ENCODE measurements at regions of chr5 and their contacts with region 1.

Region 1: DNA sequence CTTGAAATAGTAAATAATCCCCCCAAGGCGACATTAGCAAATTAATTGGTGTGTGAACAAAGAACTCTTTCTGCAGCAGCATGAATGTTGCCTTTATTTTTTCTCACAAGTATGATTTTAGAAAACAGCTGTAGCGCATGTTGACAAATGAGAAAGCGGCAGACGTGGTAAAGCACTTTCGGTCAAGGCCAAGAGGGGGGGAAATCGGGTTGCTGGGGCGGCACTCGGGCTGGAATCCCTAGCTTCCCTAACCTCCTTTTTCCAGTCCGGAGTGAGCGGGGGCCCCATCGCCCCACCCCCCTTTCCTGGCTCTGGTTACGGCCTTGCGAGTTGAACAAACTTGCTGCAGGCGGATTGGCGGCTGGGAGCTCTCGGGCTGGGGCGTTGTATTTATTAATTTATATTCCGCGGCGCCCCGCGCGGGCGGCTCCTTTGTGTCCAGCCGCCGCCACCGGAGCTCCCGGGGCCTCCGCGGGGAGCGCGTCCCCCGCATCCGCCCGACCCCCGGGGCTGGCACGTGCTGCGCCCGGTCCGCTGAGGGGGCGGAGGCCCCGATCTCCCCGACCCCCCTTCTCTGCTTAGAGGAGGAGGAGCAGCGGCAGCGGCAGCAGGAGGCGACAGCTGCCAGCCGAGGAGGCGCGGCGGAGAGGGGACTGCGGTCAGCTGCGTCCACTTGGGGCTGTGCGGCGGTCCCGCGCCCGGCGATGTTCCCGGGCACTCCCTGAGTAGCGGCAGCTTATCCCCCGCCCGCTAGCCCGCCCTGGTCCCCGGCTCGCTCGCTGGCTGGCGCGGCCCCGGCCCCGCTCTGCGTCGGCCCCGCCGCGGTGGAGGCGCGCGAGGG is at the start of gene RHOBTB3:
- DNase-seq: no peak
- ATAC-seq: peak; percentile 53
- H3K4me3 ChIP-seq: peak within 1 kb of the TSS; percentile 78
- H3K27ac ChIP-seq: peak within 1 kb of the TSS; percentile 70
- H3K4me1 ChIP-seq: peaks cover 21% of the 10 kb centered on the region
- H3K27me3 ChIP-seq: no peaks in the 10 kb centered on the region
- CTCF ChIP-seq: peak in 2 of 3 experiments; percentile 4 to 22; a peak in 3 of 6 replicates
- EP300 ChIP-seq: 0 out of 4 replicates have a peak, but pooled peaks of 1 of the 2 experiments have one; percentile 8
- POLR2A ChIP-seq: peak; percentile 77
- RAD21 ChIP-seq: no peak
- polyA plus RNA-seq, gene RHOBTB3: 3.6 to 4.1 TPM

Region 2: GRCh38 chr5:95352691-95353090 is 378.3 kb before region 1 on chr5:
- CTCF ChIA-PET with region 1: no interaction called
- POLR2A ChIA-PET with region 1: no interaction called
- RAD21 ChIA-PET with region 1: no interaction called
- SMC1A ChIA-PET with region 1: no interaction called
- in situ Hi-C with region 1: no loop called
- intact Hi-C with region 1: no loop called
- DNase-seq: no peak
- ATAC-seq: no peak
- H3K4me3 ChIP-seq: no peak overlapping the region
- H3K27ac ChIP-seq: no peak overlapping the region
- H3K4me1 ChIP-seq: no peaks in the 10 kb centered on the region
- H3K27me3 ChIP-seq: no peaks in the 10 kb centered on the region
- CTCF ChIP-seq: no peak
- EP300 ChIP-seq: no peak
- POLR2A ChIP-seq: no peak
- RAD21 ChIP-seq: no peak

Region 3: GRCh38 chr5:95646554-95647431 is 84.2 kb before region 1 on chr5 and contains the start of gene RFESD:
- CTCF ChIA-PET with region 1: interaction called, 15 read pairs
- POLR2A ChIA-PET with region 1: interaction called, 12 read pairs
- RAD21 ChIA-PET with region 1: interaction called, 15 read pairs
- SMC1A ChIA-PET with region 1: interaction called, 18 read pairs
- in situ Hi-C with region 1: no loop called
- intact Hi-C with region 1: loop called (anchors 2 kb)
- DNase-seq: peak; percentile 83
- ATAC-seq: peak; percentile 97
- H3K4me3 ChIP-seq: peak within 1 kb of the TSS; percentile 75
- H3K27ac ChIP-seq: peak within 1 kb of the TSS; percentile 80
- H3K4me1 ChIP-seq: peaks cover 5% of the 10 kb centered on the region
- H3K27me3 ChIP-seq: no peaks in the 10 kb centered on the region
- CTCF ChIP-seq: peak in 2 of 3 experiments; percentile 2 to 9; a peak in 1 of 6 replicates
- EP300 ChIP-seq: no peak
- POLR2A ChIP-seq: peak; percentile 88
- RAD21 ChIP-seq: 0 out of 2 replicates have a peak, but pooled peaks have one; percentile 1
- polyA plus RNA-seq, gene RFESD: 14.0 to 14.7 TPM

Region 4: DNA sequence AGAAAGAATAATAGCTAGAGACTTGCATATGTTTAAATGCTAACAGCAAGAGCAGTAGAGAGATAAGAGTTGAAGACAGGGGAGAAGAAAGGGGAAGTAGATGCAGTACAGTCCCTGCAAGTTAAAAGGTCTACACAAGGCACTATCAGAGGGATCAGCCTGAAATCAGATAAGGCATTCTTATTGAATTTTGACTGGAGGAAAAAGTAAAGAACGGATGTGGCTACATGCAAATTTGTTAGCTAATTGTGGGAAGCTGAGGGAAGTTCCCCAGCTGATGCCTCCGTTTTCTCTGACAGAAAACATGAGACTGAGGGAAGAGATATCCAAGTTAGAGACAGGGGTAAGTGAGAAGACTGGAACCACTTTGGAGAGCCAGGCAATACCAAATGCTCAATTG is 12.7 kb before region 1 on chr5:
- CTCF ChIA-PET with region 1: interaction called, 11 read pairs
- POLR2A ChIA-PET with region 1: interaction called, 28 read pairs
- RAD21 ChIA-PET with region 1: interaction called, 32 read pairs
- SMC1A ChIA-PET with region 1: interaction called, 58 read pairs
- in situ Hi-C with region 1: no loop called
- intact Hi-C with region 1: loop called (anchors 1 kb)
- DNase-seq: peak; percentile 84
- ATAC-seq: peak; percentile 92
- H3K4me3 ChIP-seq: peak overlapping the region; percentile 44
- H3K27ac ChIP-seq: peak overlapping the region; percentile 40
- H3K4me1 ChIP-seq: peaks cover 25% of the 10 kb centered on the region
- H3K27me3 ChIP-seq: no peaks in the 10 kb centered on the region
- CTCF ChIP-seq: no peak
- EP300 ChIP-seq: peak; percentile 26 to 72; a peak in 1 of 4 replicates
- POLR2A ChIP-seq: no peak
- RAD21 ChIP-seq: no peak

Region 5: DNA sequence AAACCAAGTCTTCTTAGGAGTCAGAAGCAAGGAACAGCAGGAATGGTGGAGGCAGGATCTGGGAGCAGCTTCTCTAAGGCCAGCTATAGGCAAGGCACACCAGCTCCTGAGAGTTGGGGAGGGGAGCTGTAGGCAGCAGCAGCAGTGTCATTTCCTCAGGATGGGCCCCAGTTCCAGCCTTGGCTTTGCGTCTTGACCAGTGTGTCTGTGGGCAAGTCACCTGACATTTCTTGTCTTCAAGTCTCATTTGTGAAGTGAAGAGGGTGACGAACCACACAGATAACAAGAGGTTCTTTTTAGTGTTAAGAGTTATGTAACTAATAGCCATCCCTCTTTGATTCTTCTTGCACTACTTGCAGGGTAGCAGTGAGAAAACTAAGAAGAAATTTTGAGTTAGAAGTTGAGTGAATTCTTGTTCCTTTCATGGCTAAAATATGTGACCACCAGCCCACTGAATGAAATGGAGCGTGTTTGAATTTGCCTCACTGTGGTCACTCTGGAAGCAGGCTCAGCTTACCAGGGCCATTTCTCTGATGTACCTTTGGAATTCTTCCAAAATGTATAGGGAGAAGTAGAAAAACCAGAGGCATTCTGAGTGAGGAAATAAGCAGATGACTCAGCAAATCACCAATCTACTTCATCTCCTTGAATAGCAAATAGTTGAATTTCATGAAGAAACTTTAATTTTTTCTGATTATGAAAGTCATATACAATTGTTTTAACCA is 42.5 kb after region 1 on chr5:
- CTCF ChIA-PET with region 1: interaction called, 6 read pairs
- POLR2A ChIA-PET with region 1: no interaction called
- RAD21 ChIA-PET with region 1: interaction called, 6 read pairs
- SMC1A ChIA-PET with region 1: interaction called, 17 read pairs
- in situ Hi-C with region 1: no loop called
- intact Hi-C with region 1: no loop called
- DNase-seq: no peak
- ATAC-seq: peak; percentile 35; the same call in 2 of the 3 replicates
- H3K4me3 ChIP-seq: no peak overlapping the region
- H3K27ac ChIP-seq: no peak overlapping the region
- H3K4me1 ChIP-seq: peaks cover 4% of the 10 kb centered on the region; the same call in 1 of the 2 replicates
- H3K27me3 ChIP-seq: no peaks in the 10 kb centered on the region
- CTCF ChIP-seq: no peak
- EP300 ChIP-seq: no peak
- POLR2A ChIP-seq: no peak
- RAD21 ChIP-seq: no peak

Region 6: GRCh38 chr5:95822542-95823181 is 91.7 kb after region 1 on chr5 and contains the start of gene GLRX:
- CTCF ChIA-PET with region 1: interaction called, 4 read pairs
- POLR2A ChIA-PET with region 1: interaction called, 10 read pairs
- RAD21 ChIA-PET with region 1: interaction called, 15 read pairs
- SMC1A ChIA-PET with region 1: interaction called, 14 read pairs
- in situ Hi-C with region 1: no loop called
- intact Hi-C with region 1: loop called (anchors 5 kb)
- DNase-seq: no peak
- ATAC-seq: peak; percentile 66
- H3K4me3 ChIP-seq: peak within 1 kb of the TSS; percentile 87
- H3K27ac ChIP-seq: peak within 1 kb of the TSS; percentile 86
- H3K4me1 ChIP-seq: peaks cover 26% of the 10 kb centered on the region
- H3K27me3 ChIP-seq: no peaks in the 10 kb centered on the region
- CTCF ChIP-seq: no peak
- EP300 ChIP-seq: 0 out of 4 replicates have a peak, but pooled peaks of 1 of the 2 experiments have one; percentile 33
- POLR2A ChIP-seq: peak; percentile 69
- RAD21 ChIP-seq: no peak
- polyA plus RNA-seq, gene GLRX: 311 to 366 TPM

Measured in GM12878 (cell line).